Mammary epithelial cell (primary cell): ENCODE measurements at regions of chr19 and their contacts with region 1.

Region 1: DNA sequence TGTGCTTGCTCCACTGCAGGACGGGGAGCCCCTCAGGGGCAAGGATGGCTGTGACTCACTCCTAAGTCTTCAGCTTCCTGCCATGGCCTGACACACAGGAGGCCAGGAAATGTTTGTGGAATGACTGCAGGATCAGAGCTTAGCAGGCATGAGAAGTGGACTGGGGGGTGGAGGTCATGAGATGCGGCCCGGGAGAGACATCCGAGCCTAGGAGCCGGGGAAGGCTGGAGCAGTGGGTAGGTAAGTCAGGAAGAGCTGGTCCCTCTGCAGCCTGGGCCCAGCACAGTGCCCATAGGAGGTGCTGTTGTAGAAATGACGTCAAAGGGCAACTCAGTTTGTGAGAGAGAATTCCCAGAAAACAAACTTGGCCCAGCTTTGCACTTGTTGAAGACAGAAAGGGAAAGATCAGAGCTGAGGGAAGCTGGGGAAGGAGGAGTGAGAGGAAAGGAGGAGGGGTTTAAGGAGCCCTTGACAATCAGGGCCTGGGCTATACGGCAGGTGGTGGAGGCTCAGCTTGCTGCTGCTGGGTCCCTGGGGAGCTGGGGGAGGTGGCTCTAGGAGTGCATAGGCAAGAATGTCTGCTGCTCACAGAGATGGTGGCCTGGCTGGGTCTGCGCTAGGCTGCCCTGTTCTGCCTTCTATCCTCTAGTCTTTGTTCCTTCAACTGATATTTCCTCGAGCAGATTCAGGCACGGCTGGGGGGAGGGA is 18.5 kb downstream of the POU2F2 start:
- DNase-seq: peak; percentile 96
- H3K4me3 ChIP-seq: peak overlapping the region in 1 of 3 experiments; percentile 21
- H3K27ac ChIP-seq: peak overlapping the region; percentile 87
- H3K4me1 ChIP-seq: peaks cover 48% of the 10 kb centered on the region
- H3K27me3 ChIP-seq: no peaks in the 10 kb centered on the region
- CTCF ChIP-seq: peak; percentile 39 to 41

Region 2: DNA sequence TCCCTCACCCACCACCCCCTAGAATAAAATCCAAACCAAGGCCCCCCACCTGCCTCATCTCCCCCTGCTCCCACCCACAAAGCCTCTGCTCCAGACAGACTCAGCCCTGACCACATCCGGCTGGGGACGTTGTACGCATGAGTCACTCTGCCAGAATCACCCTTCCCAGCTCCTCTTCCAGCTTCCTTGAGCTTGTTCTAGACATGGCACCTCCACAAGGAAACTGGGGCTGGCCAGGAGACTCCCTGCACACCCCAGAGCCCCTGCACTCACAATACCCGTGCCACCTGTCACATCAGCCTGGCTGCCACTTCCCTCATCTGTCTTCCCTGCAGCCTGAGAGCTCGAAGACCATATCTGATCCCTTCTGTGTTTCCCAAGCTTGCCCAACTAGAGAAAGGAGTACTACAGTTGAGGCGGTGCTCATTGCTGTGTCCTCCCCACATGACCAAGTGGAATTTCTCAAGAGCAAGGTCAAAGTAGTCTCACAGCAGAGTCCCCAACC is 94.0 kb after region 1 on chr19:
- CTCF ChIA-PET with region 1: no interaction called
- dilution Hi-C with region 1: no loop called
- in situ Hi-C with region 1: no loop called
- intact Hi-C with region 1: no loop called
- DNase-seq: peak; percentile 76
- H3K4me3 ChIP-seq: no peak overlapping the region
- H3K27ac ChIP-seq: peak overlapping the region; percentile 38
- H3K4me1 ChIP-seq: peaks cover 32% of the 10 kb centered on the region
- H3K27me3 ChIP-seq: no peaks in the 10 kb centered on the region
- CTCF ChIP-seq: no peak

Region 3: DNA sequence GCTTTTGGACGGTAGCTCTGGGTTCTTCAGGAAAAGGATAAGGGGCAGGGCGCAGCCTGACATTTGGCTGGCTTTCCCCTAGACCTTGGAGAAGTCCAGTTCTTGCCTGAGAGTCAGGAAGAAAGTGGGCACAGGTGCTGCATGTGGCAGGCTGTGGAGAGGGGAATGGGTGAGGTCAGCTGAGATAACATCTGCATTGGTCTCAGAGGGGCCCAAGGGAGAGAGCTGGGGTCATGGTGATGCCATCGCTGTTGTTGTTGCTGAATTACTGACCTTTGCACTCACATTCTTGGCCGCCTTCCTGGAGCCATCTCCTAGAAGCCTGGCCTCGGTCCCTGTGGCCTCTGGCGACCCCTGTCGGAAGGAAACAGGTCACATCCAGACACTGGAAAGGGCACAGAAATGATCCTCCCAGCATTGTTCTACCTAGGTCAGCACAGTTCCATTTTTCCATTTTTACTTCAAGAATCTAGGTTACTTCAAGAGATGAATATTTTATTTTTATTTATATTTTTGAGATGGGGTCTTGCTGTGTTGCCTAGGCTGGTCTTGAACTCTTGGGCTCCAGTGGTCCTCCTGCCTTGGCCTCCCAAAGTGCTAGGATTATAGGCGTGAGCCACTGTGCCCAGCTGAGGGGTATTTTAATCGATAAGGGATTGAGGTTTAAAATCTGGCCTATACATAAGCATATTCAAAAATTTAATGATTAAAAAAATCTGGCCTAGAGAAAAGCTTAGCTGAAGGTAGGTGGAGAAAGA is 319.9 kb after region 1 on chr19:
- CTCF ChIA-PET with region 1: no interaction called
- dilution Hi-C with region 1: no loop called
- in situ Hi-C with region 1: loop called in 1 of 2 experiments (anchors 10 kb)
- intact Hi-C with region 1: loop called (anchors 1 kb)
- DNase-seq: peak; percentile 39
- H3K4me3 ChIP-seq: no peak overlapping the region
- H3K27ac ChIP-seq: no peak overlapping the region
- H3K4me1 ChIP-seq: no peaks in the 10 kb centered on the region
- H3K27me3 ChIP-seq: no peaks in the 10 kb centered on the region
- CTCF ChIP-seq: peak; percentile 78 to 91

Region 4: GRCh38 chr19:42529248-42529764 is 415.5 kb after region 1 on chr19:
- CTCF ChIA-PET with region 1: no interaction called
- dilution Hi-C with region 1: no loop called
- in situ Hi-C with region 1: no loop called
- intact Hi-C with region 1: loop called (anchors 5 kb)
- DNase-seq: peak; percentile 44
- H3K4me3 ChIP-seq: no peak overlapping the region
- H3K27ac ChIP-seq: no peak overlapping the region
- H3K4me1 ChIP-seq: peaks cover 21% of the 10 kb centered on the region
- H3K27me3 ChIP-seq: no peaks in the 10 kb centered on the region
- CTCF ChIP-seq: peak; percentile 92 to 97